ENCODE measurements at regions of chr1 and their contacts with region 1.

Region 1: DNA sequence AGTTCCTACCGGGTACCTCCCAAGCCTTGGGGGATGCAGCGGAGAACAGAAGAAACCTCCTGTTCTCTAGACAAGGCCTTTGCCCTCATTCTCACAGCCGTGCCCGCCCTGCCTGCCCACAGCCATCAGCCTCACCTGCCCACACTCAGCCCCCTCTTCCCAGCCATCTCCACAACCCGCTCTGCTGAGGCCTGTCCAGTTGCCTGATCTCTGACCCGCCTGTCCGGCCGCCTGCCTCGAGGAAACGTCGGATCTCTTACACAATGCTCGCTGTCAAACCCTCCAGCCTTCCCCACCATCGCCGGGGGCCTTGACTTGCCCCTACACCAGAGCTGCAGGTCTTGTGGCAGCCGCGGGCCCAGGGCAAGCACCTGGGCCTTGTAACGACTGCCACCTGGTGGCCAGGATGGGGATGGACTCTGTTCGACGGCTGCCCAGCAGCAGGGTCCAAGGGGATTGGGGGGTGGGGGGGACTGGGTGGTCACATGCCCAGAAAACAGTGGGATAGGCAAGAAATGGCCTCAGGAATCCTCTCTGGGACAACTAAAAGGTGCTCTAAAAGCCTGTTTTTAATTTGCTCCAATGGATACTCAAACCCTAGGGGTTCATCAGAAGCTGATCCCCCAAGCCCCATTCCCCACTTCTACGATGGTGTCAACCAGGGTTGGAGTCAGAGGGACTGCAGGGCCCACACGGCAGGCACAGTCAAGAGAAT is 31.0 kb downstream of the SLC45A1 start:
- DNase-seq: peak; percentile 47 to 83 (median 74)
- ATAC-seq: peak; percentile 96
- H3K4me3 ChIP-seq: no peak overlapping the region
- H3K4me3 Mint-ChIP-seq: no peak overlapping the region
- H3K27ac ChIP-seq: no peak overlapping the region
- H3K27ac Mint-ChIP-seq: peak overlapping the region; percentile 70
- H3K4me1 ChIP-seq: peaks cover 3% of the 10 kb centered on the region
- H3K4me1 Mint-ChIP-seq: peaks cover 4% of the 10 kb centered on the region
- H3K27me3 ChIP-seq: no peaks in the 10 kb centered on the region
- H3K27me3 Mint-ChIP-seq: peaks cover 2% of the 10 kb centered on the region
- CTCF ChIP-seq: peak; percentile 69

Region 2: GRCh38 chr1:7808253-7808844 is 540.6 kb before region 1 on chr1:
- CTCF ChIA-PET with region 1: no interaction called
- POLR2A ChIA-PET with region 1: no interaction called
- intact Hi-C with region 1: loop called in 1 of 2 experiments (anchors 5 kb)
- DNase-seq: peak in 2 of 9 experiments; percentile 43 to 63
- ATAC-seq: peak; percentile 62
- H3K4me3 ChIP-seq: no peak overlapping the region
- H3K4me3 Mint-ChIP-seq: no peak overlapping the region
- H3K27ac ChIP-seq: no peak overlapping the region
- H3K27ac Mint-ChIP-seq: no peak overlapping the region
- H3K4me1 ChIP-seq: no peaks in the 10 kb centered on the region
- H3K4me1 Mint-ChIP-seq: no peaks in the 10 kb centered on the region
- H3K27me3 ChIP-seq: no peaks in the 10 kb centered on the region
- H3K27me3 Mint-ChIP-seq: no peaks in the 10 kb centered on the region
- CTCF ChIP-seq: peak; percentile 37

Region 3: DNA sequence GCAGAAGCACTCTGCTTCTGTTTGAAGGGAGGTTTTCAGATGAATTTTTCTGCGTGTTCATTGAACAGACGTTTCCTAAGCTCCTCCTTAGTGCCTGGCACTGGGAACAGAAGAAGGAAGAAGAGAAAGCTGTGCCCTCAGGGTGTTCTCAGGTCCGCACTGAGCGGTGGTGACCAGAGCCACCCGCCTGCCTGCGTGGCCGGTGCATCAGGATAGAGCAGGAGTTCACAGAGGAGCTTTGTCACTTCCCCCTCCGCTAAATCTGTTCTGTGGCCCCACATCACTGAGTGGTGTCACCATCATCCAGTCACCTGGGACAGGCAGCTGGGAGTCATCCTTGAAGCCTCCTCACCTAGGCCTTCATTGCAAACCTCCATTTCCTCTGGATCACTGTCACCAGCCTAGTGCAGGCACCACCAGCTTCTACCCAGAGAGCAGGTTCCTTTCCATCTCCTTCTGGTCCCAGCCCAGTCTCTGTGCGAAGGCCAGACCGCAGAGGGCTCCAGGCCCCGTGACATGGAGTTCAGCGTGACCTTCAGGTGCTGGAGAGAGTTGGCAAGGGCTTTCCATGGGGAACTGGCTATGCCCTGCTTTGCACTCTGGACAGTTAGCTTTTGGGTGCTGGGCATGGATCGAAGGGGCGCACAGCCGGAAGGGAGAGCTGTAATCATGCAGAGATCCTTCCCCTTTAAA is 365.7 kb before region 1 on chr1:
- CTCF ChIA-PET with region 1: interaction called, 21 read pairs
- POLR2A ChIA-PET with region 1: no interaction called
- intact Hi-C with region 1: loop called (anchors 1 kb)
- DNase-seq: no peak
- ATAC-seq: no peak
- H3K4me3 ChIP-seq: no peak overlapping the region
- H3K4me3 Mint-ChIP-seq: no peak overlapping the region
- H3K27ac ChIP-seq: no peak overlapping the region
- H3K27ac Mint-ChIP-seq: no peak overlapping the region
- H3K4me1 ChIP-seq: peaks cover 4% of the 10 kb centered on the region
- H3K4me1 Mint-ChIP-seq: peaks cover 12% of the 10 kb centered on the region
- H3K27me3 ChIP-seq: no peaks in the 10 kb centered on the region
- H3K27me3 Mint-ChIP-seq: no peaks in the 10 kb centered on the region
- CTCF ChIP-seq: no peak

Region 4: GRCh38 chr1:8456308-8456912 is 107.5 kb after region 1 on chr1:
- CTCF ChIA-PET with region 1: no interaction called
- POLR2A ChIA-PET with region 1: no interaction called
- intact Hi-C with region 1: no loop called
- DNase-seq: no peak
- ATAC-seq: no peak
- H3K4me3 ChIP-seq: no peak overlapping the region
- H3K4me3 Mint-ChIP-seq: no peak overlapping the region
- H3K27ac ChIP-seq: no peak overlapping the region
- H3K27ac Mint-ChIP-seq: no peak overlapping the region
- H3K4me1 ChIP-seq: peaks cover 13% of the 10 kb centered on the region
- H3K4me1 Mint-ChIP-seq: peaks cover 31% of the 10 kb centered on the region
- H3K27me3 ChIP-seq: no peaks in the 10 kb centered on the region
- H3K27me3 Mint-ChIP-seq: no peaks in the 10 kb centered on the region
- CTCF ChIP-seq: no peak

Measured in CD8-positive, alpha-beta T cell (primary cell).